IMR-90 (cell line): ENCODE measurements at regions of chr12 and their contacts with region 1.

Region 1: DNA sequence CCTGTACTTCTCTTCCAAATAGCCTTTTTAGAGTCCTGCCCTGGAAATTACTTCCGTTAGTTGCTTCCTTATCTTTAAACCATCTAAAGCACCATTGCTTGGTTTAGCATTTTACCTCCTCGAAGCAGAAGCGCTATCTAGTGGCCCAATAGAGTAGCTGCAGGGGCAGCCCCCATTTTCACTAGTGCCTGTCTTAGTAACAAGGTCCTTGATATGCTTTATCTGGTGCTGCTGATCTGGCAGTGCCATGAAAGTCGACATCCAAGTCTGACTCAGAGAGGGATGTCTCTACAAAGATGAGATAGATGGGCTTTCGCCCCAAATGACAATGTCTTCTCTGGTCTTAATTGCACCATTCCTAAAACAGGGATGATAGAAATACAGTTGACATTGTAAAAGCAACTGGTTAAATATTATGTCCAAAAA is 25.0 kb upstream of the CIT start:
- DNase-seq: peak; percentile 77
- ATAC-seq: peak; percentile 100
- H3K4me3 ChIP-seq: no peak overlapping the region
- H3K27ac ChIP-seq: no peak overlapping the region
- H3K4me1 ChIP-seq: no peaks in the 10 kb centered on the region
- H3K27me3 ChIP-seq: 0 out of 2 replicates have a peak, but pooled peaks cover 3% of the 10 kb centered on the region
- CTCF ChIP-seq: peak; percentile 89
- POLR2A ChIP-seq: no peak
- RAD21 ChIP-seq: peak; percentile 88

Region 2: GRCh38 chr12:119667577-119668323 is 234.3 kb before region 1 on chr12 and contains the start of gene PRKAB1:
- CTCF ChIA-PET with region 1: no interaction called
- POLR2A ChIA-PET with region 1: no interaction called
- dilution Hi-C with region 1: no loop called
- in situ Hi-C with region 1: no loop called
- intact Hi-C with region 1: loop called (anchors 2 kb)
- DNase-seq: peak; percentile 96
- ATAC-seq: peak; percentile 99
- H3K4me3 ChIP-seq: peak within 1 kb of the TSS; percentile 81
- H3K27ac ChIP-seq: peak within 1 kb of the TSS; percentile 80
- H3K4me1 ChIP-seq: no peaks in the 10 kb centered on the region
- H3K27me3 ChIP-seq: no peaks in the 10 kb centered on the region
- CTCF ChIP-seq: peak; percentile 96
- POLR2A ChIP-seq: peak; percentile 61
- RAD21 ChIP-seq: peak; percentile 60
- total RNA-seq, gene PRKAB1: 6.9 and 9.7 TPM in 2 replicates

Region 3: DNA sequence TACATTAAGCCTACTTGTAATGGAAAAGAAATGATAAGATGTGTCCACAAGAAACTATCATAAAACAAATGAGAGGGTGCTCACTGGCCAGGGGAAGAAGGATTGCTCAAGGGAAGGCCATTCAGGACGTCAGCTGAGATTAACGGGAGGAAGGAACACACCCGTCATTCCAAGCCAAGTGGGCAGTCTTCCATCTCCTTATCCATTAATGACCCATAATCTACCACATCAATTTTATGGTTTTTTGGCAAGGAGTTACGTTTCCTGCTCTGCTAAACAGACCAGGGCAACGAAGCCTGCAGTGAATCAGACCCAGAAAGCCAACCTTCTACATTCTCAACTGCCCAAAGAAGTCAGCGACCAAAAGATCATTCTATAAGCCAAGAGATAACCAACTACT is 209.1 kb before region 1 on chr12:
- CTCF ChIA-PET with region 1: no interaction called
- POLR2A ChIA-PET with region 1: no interaction called
- dilution Hi-C with region 1: no loop called
- in situ Hi-C with region 1: no loop called
- intact Hi-C with region 1: loop called (anchors 2 kb)
- DNase-seq: peak; percentile 90
- ATAC-seq: peak; percentile 79
- H3K4me3 ChIP-seq: no peak overlapping the region
- H3K27ac ChIP-seq: peak overlapping the region; percentile 50; the same call in 1 of the 2 replicates
- H3K4me1 ChIP-seq: peaks cover 10% of the 10 kb centered on the region
- H3K27me3 ChIP-seq: no peaks in the 10 kb centered on the region
- CTCF ChIP-seq: no peak
- POLR2A ChIP-seq: no peak
- RAD21 ChIP-seq: no peak

Region 4: GRCh38 chr12:119770146-119770545 is 132.0 kb before region 1 on chr12:
- CTCF ChIA-PET with region 1: interaction called, 10 read pairs
- POLR2A ChIA-PET with region 1: no interaction called
- dilution Hi-C with region 1: no loop called
- in situ Hi-C with region 1: no loop called
- intact Hi-C with region 1: no loop called
- DNase-seq: peak; percentile 15
- ATAC-seq: no peak
- H3K4me3 ChIP-seq: no peak overlapping the region
- H3K27ac ChIP-seq: no peak overlapping the region
- H3K4me1 ChIP-seq: peaks cover 2% of the 10 kb centered on the region; the same call in 1 of the 2 replicates
- H3K27me3 ChIP-seq: no peaks in the 10 kb centered on the region
- CTCF ChIP-seq: no peak
- POLR2A ChIP-seq: no peak
- RAD21 ChIP-seq: no peak

Region 5: DNA sequence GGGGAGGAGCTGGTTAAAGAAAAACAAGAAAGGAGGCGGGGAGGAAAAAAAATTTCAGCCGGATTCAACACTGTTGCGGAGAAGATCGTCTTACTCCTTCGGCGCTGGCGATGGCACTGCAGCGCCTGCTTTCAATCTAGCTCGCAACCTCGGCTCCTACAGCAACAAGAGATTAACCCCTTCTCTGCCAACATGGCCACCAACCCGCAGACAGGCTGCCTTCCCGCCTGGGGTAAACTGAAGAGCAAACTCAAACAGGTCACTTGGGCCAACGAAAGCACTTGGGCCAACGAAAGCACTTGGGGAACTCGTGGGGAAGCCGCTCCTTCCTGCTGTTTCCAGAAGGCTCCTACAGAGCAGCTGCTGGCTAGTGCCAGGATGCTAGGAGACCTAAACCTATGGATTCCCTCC is 98.7 kb before region 1 on chr12:
- CTCF ChIA-PET with region 1: interaction called, 3 read pairs
- POLR2A ChIA-PET with region 1: no interaction called
- dilution Hi-C with region 1: no loop called
- in situ Hi-C with region 1: no loop called
- intact Hi-C with region 1: loop called (anchors 2 kb)
- DNase-seq: peak; percentile 42
- ATAC-seq: peak; percentile 52
- H3K4me3 ChIP-seq: peak overlapping the region; percentile 20
- H3K27ac ChIP-seq: no peak overlapping the region
- H3K4me1 ChIP-seq: no peaks in the 10 kb centered on the region; the same call in 1 of the 2 replicates
- H3K27me3 ChIP-seq: no peaks in the 10 kb centered on the region
- CTCF ChIP-seq: no peak
- POLR2A ChIP-seq: no peak
- RAD21 ChIP-seq: no peak

Region 6: DNA sequence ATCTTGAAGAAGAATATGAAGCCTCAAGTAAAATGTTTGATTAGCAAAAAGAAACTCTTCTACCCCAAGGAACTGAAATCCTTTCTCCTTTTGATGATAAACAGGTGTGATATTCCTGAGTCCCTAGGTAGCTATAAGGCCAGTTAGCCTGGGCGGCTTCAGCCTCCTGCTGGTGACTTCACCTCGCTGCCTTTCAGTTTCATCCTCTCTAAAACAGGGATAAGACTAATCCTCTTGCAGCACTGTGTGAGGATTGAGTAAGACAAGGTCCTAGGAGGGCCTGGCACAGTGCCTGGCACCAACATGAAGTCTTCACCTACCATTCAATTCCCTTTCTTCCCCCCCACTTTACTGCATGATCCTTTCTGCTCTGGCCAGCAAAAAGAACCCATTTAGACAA is 67.0 kb before region 1 on chr12:
- CTCF ChIA-PET with region 1: no interaction called
- POLR2A ChIA-PET with region 1: no interaction called
- dilution Hi-C with region 1: no loop called
- in situ Hi-C with region 1: no loop called
- intact Hi-C with region 1: no loop called
- DNase-seq: peak; percentile 17
- ATAC-seq: 0 out of 2 replicates have a peak, but pooled peaks have one; percentile 37
- H3K4me3 ChIP-seq: no peak overlapping the region
- H3K27ac ChIP-seq: no peak overlapping the region
- H3K4me1 ChIP-seq: no peaks in the 10 kb centered on the region
- H3K27me3 ChIP-seq: no peaks in the 10 kb centered on the region
- CTCF ChIP-seq: 0 out of 2 replicates have a peak, but pooled peaks have one; percentile 16
- POLR2A ChIP-seq: no peak
- RAD21 ChIP-seq: no peak